B cell (primary cell): ENCODE measurements at regions of chr1 and their contacts with region 1.

Region 1: GRCh38 chr1:40153073-40153770 is 8.0 kb upstream of the RLF start:
- DNase-seq: peak; percentile 83
- ATAC-seq: peak; percentile 79
- H3K4me3 ChIP-seq: peak overlapping the region in 4 of 5 experiments; percentile 29 to 60 (median 31)
- H3K4me3 Mint-ChIP-seq: peak overlapping the region; percentile 80
- H3K27ac ChIP-seq: peak overlapping the region; percentile 79 to 82
- H3K27ac Mint-ChIP-seq: peak overlapping the region; percentile 95
- H3K4me1 ChIP-seq: peaks cover 21 to 22% of the 10 kb centered on the region in 2 donors
- H3K4me1 Mint-ChIP-seq: peaks cover 25% of the 10 kb centered on the region
- H3K27me3 ChIP-seq: no peaks in the 10 kb centered on the region
- H3K27me3 Mint-ChIP-seq: no peaks in the 10 kb centered on the region
- CTCF ChIP-seq: peak; percentile 82

Region 2: GRCh38 chr1:40096646-40096976 is 56.6 kb before region 1 on chr1:
- CTCF ChIA-PET with region 1: no interaction called
- POLR2A ChIA-PET with region 1: no interaction called
- intact Hi-C with region 1: no loop called
- DNase-seq: no peak
- ATAC-seq: peak; percentile 28
- H3K4me3 ChIP-seq: peak overlapping the region; percentile 69 to 80 (median 79)
- H3K4me3 Mint-ChIP-seq: peak overlapping the region; percentile 88
- H3K27ac ChIP-seq: peak overlapping the region; percentile 53 to 68
- H3K27ac Mint-ChIP-seq: peak overlapping the region; percentile 92
- H3K4me1 ChIP-seq: peaks cover 14 to 20% of the 10 kb centered on the region in 2 donors
- H3K4me1 Mint-ChIP-seq: peaks cover 19% of the 10 kb centered on the region
- H3K27me3 ChIP-seq: no peaks in the 10 kb centered on the region
- H3K27me3 Mint-ChIP-seq: peaks cover 11% of the 10 kb centered on the region
- CTCF ChIP-seq: no peak

Region 3: DNA sequence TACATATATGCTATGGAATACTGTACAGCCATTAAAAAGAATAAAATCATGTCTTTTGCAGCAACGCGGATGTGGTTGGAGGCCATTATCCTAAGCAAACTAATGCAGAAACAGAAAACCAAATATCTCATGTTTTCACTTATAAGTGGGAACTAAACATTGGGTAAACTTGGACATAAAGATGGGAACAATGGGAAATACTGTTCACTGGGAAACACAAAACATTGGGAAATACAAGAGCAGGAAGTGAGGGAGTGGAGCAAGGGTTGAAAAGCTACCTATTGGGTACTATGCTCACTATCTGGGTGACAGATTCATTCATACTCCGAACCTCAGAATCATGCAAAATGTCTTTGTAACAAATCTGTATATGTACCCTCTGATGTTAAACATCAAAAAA is 38.8 kb before region 1 on chr1:
- CTCF ChIA-PET with region 1: no interaction called
- POLR2A ChIA-PET with region 1: no interaction called
- intact Hi-C with region 1: no loop called
- DNase-seq: no peak
- ATAC-seq: no peak
- H3K4me3 ChIP-seq: no peak overlapping the region
- H3K4me3 Mint-ChIP-seq: no peak overlapping the region
- H3K27ac ChIP-seq: no peak overlapping the region
- H3K27ac Mint-ChIP-seq: no peak overlapping the region
- H3K4me1 ChIP-seq: no peaks in the 10 kb centered on the region
- H3K4me1 Mint-ChIP-seq: no peaks in the 10 kb centered on the region
- H3K27me3 ChIP-seq: peaks cover 0 to 6% (median 1%) of the 10 kb centered on the region in 4 experiments
- H3K27me3 Mint-ChIP-seq: peaks cover 35% of the 10 kb centered on the region
- CTCF ChIP-seq: no peak

Region 4: GRCh38 chr1:40185951-40186864 is 33.0 kb after region 1 on chr1:
- CTCF ChIA-PET with region 1: interaction called, 61 read pairs
- POLR2A ChIA-PET with region 1: interaction called, 7 read pairs
- intact Hi-C with region 1: loop called (anchors 2 kb)
- DNase-seq: peak; percentile 62
- ATAC-seq: peak; percentile 94
- H3K4me3 ChIP-seq: no peak overlapping the region
- H3K4me3 Mint-ChIP-seq: peak overlapping the region; percentile 60
- H3K27ac ChIP-seq: no peak overlapping the region
- H3K27ac Mint-ChIP-seq: no peak overlapping the region
- H3K4me1 ChIP-seq: peaks cover 18 to 20% of the 10 kb centered on the region in 2 donors
- H3K4me1 Mint-ChIP-seq: peaks cover 48% of the 10 kb centered on the region
- H3K27me3 ChIP-seq: no peaks in the 10 kb centered on the region
- H3K27me3 Mint-ChIP-seq: no peaks in the 10 kb centered on the region
- CTCF ChIP-seq: no peak

Region 5: DNA sequence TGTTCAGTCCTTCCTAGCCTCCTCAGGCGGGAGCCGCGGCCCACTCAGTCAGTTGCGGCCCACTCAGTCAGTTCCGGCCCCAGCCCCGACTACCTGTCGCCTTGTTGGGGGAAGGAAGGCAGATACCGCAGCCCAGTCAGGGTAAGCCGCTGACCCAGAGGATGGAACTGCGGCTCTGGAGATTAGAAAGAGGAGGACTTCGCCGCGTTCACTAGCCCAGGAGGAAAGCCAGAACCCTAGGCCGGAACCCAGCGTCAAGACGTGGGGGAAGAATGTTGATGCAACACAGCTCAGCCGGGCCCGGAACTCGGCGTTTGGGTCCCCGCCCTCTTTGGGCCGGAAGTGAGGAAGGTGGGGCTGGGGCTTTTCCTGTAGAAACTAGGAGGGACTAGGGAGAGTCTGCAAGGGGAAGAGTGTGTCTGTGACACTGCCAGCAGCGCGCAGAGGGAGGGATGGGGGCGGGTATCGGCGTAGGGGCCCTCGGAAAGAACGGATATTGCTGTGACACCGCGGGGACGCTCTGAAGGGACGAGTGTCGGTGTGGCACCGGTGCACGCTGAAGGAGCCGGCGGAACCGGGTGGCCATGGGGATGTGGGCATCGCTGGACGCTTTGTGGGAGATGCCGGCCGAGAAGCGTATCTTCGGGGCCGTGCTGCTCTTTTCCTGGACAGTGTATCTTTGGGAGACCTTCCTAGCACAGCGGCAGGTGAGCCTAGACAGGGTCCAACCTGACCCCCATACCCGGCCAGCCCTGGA is 104.6 kb after region 1 on chr1 and contains the start of gene ZMPSTE24:
- CTCF ChIA-PET with region 1: interaction called, 5 read pairs
- POLR2A ChIA-PET with region 1: interaction called, 6 read pairs
- intact Hi-C with region 1: loop called (anchors 1 kb)
- DNase-seq: peak; percentile 98
- ATAC-seq: peak; percentile 94
- H3K4me3 ChIP-seq: peak within 1 kb of the TSS; percentile 80 to 98 (median 96)
- H3K4me3 Mint-ChIP-seq: peak within 1 kb of the TSS; percentile 97
- H3K27ac ChIP-seq: peak within 1 kb of the TSS; percentile 99
- H3K27ac Mint-ChIP-seq: peak within 1 kb of the TSS; percentile 99
- H3K4me1 ChIP-seq: peaks cover 9 to 10% of the 10 kb centered on the region in 2 donors
- H3K4me1 Mint-ChIP-seq: peaks cover 32% of the 10 kb centered on the region
- H3K27me3 ChIP-seq: no peaks in the 10 kb centered on the region
- H3K27me3 Mint-ChIP-seq: no peaks in the 10 kb centered on the region
- CTCF ChIP-seq: no peak
- total RNA-seq, gene ZMPSTE24: 14.0 and 18.5 TPM in 2 replicates

Region 6: DNA sequence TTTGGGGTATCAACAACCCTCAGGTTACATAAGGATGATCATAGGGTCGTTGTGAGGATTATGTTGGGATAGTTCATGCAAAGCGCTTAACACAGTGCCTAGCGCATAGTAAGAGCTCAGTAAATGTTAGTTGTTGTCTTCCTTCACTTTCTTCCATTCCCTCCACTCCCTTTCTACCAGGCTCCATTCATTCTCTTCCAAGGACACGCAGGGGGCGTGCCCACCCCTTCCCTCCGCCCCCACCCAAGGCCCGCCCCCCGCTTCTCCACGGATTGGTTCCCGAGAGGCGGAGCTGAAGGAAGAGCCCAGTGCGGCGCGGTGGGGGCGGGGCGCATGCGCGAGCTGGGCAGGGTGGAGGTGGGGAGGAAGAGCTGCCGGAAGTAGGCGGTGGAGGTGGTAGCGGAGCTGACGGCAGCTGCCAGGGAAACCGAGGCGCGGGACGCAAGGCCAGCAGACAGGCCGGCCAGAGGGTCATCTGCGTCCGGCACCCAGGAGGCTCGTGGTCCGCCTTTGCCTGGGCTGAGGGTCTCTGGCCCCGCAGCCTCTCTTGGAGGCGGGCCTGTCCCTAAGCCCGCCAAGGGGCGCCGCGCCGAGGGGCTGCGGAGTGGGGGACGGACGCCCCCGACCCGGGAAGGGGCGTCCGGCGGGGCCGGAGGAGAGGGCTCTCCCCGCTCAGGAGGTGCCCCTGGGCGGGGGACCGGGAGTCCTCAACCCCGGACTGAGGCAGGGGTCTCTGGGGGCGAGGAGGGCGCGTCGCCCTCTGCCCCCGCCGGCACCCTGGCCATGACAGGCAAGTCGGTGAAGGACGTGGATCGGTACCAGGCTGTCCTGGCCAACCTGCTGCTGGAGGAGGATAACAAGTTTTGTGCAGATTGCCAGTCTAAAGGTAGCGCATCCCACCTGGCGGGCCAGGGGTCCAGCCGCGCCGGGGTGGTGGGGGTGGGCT is 220.4 kb after region 1 on chr1 and contains the start of gene SMAP2:
- CTCF ChIA-PET with region 1: interaction called, 13 read pairs
- POLR2A ChIA-PET with region 1: no interaction called
- intact Hi-C with region 1: no loop called
- DNase-seq: peak; percentile 95
- ATAC-seq: peak; percentile 88
- H3K4me3 ChIP-seq: peak within 1 kb of the TSS; percentile 76 to 100 (median 97)
- H3K4me3 Mint-ChIP-seq: peak within 1 kb of the TSS; percentile 96
- H3K27ac ChIP-seq: peak within 1 kb of the TSS; percentile 89 to 100
- H3K27ac Mint-ChIP-seq: peak within 1 kb of the TSS; percentile 95
- H3K4me1 ChIP-seq: peaks cover 36 to 37% of the 10 kb centered on the region in 2 donors
- H3K4me1 Mint-ChIP-seq: peaks cover 48% of the 10 kb centered on the region
- H3K27me3 ChIP-seq: no peaks in the 10 kb centered on the region
- H3K27me3 Mint-ChIP-seq: no peaks in the 10 kb centered on the region
- CTCF ChIP-seq: no peak
- total RNA-seq, gene SMAP2: 300 and 305 TPM in 2 replicates

Region 7: GRCh38 chr1:40404670-40405462 is 251.6 kb after region 1 on chr1:
- CTCF ChIA-PET with region 1: interaction called, 56 read pairs
- POLR2A ChIA-PET with region 1: interaction called, 4 read pairs
- intact Hi-C with region 1: no loop called
- DNase-seq: peak; percentile 84
- ATAC-seq: peak; percentile 36
- H3K4me3 ChIP-seq: peak overlapping the region in 1 of 5 experiments; percentile 4
- H3K4me3 Mint-ChIP-seq: peak overlapping the region; percentile 61
- H3K27ac ChIP-seq: peak overlapping the region; percentile 76 to 100
- H3K27ac Mint-ChIP-seq: peak overlapping the region; percentile 92
- H3K4me1 ChIP-seq: peaks cover 54 to 58% of the 10 kb centered on the region in 2 donors
- H3K4me1 Mint-ChIP-seq: peaks cover 62% of the 10 kb centered on the region
- H3K27me3 ChIP-seq: no peaks in the 10 kb centered on the region
- H3K27me3 Mint-ChIP-seq: no peaks in the 10 kb centered on the region
- CTCF ChIP-seq: peak; percentile 88

Region 8: GRCh38 chr1:40449684-40450494 is 296.7 kb after region 1 on chr1 and contains the start of gene ZFP69B:
- CTCF ChIA-PET with region 1: interaction called, 3 read pairs
- POLR2A ChIA-PET with region 1: no interaction called
- intact Hi-C with region 1: loop called (anchors 1 kb)
- DNase-seq: peak; percentile 92
- ATAC-seq: peak; percentile 81
- H3K4me3 ChIP-seq: peak within 1 kb of the TSS; percentile 62 to 79 (median 76)
- H3K4me3 Mint-ChIP-seq: peak within 1 kb of the TSS; percentile 96
- H3K27ac ChIP-seq: peak within 1 kb of the TSS in 1 of 2 donors; percentile 60
- H3K27ac Mint-ChIP-seq: peak within 1 kb of the TSS; percentile 93
- H3K4me1 ChIP-seq: peaks cover 14 to 17% of the 10 kb centered on the region in 2 donors
- H3K4me1 Mint-ChIP-seq: peaks cover 27% of the 10 kb centered on the region
- H3K27me3 ChIP-seq: no peaks in the 10 kb centered on the region
- H3K27me3 Mint-ChIP-seq: no peaks in the 10 kb centered on the region
- CTCF ChIP-seq: no peak
- total RNA-seq, gene ZFP69B: 10.8 and 11.8 TPM in 2 replicates